ENCODE measurements at regions of chr20 and their contacts with region 1.

Region 1: DNA sequence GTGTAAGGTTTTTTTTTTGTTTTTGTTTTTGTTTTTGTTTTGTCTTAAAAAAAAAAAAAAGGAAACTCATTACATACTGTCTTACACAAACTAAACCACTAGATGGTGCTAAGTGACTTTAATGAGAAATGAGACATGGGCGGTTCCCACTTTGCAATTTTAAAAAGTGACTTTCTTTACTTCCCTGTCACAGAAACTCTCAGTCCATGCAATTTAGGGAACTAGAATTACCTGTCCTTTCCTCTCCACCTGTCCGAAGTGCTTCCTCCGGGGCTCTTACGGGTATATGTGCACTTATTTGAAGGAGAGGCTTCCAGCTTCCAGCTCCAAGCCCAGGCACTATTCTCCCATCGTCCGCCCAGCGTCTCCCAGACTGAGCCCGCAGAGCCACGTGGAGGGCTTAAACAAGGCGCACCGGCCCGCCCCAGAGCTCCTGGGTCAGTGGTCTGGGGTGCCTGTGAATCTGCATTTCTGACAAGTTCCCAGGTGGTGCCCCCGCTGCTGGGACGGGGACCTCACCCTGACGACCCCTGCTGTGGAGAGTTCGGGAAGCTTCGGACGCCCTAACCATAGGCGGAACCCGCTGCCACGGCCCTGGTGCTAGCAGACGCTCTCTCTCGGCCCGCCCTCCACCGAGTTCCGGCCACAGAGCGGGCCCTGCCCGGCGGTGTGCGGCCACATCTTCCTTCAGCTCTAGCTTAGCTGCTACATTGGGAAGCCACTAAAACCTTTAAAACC is 26.1 kb downstream of the BFSP1 start:
- DNase-seq: peak; percentile 67 to 89 (median 83)
- ATAC-seq: peak; percentile 88 to 90
- H3K4me3 ChIP-seq: peak overlapping the region; percentile 49
- H3K27ac ChIP-seq: no peak overlapping the region
- H3K4me1 ChIP-seq: no peaks in the 10 kb centered on the region
- H3K27me3 ChIP-seq: no peaks in the 10 kb centered on the region

Region 2: DNA sequence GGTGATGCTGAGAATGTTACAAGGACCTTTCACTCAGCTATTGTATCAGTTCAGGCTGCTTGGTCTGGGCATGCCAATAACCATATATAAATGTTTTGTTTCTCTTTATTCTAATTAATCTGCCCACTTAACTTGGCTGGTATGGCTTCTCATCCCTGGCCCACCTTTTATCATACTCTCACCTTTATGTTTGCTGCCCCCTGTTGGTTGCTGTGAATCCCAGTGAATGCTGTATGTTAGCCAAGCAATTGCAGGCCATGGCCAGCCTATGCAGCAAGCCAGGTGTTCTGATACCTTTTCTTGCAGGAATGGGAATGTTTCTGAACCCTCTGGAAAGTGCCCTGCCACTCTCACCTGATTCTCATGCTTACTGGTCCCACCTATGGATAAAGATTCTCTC is 223.6 kb before region 1 on chr20:
- intact Hi-C with region 1: no loop called
- DNase-seq: no peak
- ATAC-seq: no peak
- H3K4me3 ChIP-seq: no peak overlapping the region
- H3K27ac ChIP-seq: no peak overlapping the region
- H3K4me1 ChIP-seq: no peaks in the 10 kb centered on the region
- H3K27me3 ChIP-seq: no peaks in the 10 kb centered on the region

Region 3: GRCh38 chr20:17491041-17491440 is 14.0 kb before region 1 on chr20:
- intact Hi-C with region 1: no loop called
- DNase-seq: no peak
- ATAC-seq: no peak
- H3K4me3 ChIP-seq: no peak overlapping the region
- H3K27ac ChIP-seq: no peak overlapping the region
- H3K4me1 ChIP-seq: no peaks in the 10 kb centered on the region
- H3K27me3 ChIP-seq: no peaks in the 10 kb centered on the region

Region 4: DNA sequence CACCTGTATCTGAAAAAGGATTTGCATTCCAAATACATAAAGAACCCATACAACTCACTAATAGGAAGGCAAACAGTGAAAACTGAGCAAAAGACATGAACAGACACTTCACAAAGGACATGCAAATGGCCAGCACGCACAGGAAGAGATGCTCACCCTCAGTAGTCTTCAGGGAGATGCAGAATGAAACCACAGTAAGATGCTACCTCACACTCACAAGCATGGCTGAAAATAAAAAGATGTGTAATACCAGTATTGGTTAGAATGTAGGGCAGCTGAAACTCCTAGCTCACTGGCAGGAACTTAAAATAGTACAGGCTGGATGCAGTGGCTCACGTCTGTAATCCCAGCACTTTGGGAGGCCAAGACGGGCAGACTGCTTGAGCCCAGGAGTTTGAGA is 399.0 kb after region 1 on chr20:
- intact Hi-C with region 1: loop called in 2 of 4 experiments (anchors 5 to 10 kb)
- DNase-seq: no peak
- ATAC-seq: no peak
- H3K4me3 ChIP-seq: no peak overlapping the region
- H3K27ac ChIP-seq: no peak overlapping the region
- H3K4me1 ChIP-seq: no peaks in the 10 kb centered on the region
- H3K27me3 ChIP-seq: no peaks in the 10 kb centered on the region

Region 5: GRCh38 chr20:17938871-17939619 is 434.0 kb after region 1 on chr20:
- intact Hi-C with region 1: loop called in 1 of 4 experiments (anchors 10 kb)
- DNase-seq: peak; percentile 62 to 83 (median 81)
- ATAC-seq: peak; percentile 72 to 74
- H3K4me3 ChIP-seq: no peak overlapping the region
- H3K27ac ChIP-seq: no peak overlapping the region
- H3K4me1 ChIP-seq: no peaks in the 10 kb centered on the region
- H3K27me3 ChIP-seq: no peaks in the 10 kb centered on the region

Region 6: DNA sequence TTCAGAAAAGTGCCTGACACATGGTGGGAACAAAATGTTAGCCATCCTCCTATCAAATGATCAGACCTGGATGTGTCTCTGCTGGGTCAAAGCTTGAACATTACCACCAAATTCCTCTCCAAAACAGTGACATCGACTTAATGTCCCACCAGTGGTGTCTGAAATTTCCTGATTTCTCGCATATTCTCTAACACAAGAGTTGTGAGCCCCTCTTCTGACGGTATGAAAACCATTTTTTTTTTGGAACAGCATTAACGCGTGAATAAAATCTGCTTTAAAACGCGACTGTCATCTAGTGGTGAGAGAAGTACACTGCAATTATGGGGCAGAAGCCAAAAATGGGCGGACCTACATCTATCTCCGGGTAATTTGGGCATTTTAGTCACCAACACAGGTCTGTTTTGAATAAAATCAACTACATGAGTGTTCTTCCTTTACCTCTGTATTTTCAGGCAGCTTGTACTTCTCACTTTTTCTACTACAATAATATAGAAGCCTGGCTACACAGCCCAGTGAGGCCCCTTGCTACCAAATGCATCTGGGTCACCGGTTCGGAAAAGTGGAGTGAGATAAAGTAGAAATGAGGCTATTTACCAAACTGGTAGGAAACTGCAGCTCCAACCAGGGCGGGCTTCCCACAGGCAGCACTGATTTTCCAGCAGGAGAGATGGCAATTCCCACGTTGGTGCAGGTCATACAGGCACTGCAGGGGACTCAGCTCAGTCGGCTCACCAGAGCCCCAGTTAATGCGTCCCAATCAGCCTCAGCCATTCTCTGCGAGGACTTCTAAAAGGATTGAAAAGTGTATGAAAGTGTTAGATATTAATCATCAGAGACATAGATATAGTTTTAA is 491.1 kb after region 1 on chr20:
- intact Hi-C with region 1: loop called in 3 of 4 experiments (anchors 5 to 10 kb)
- DNase-seq: no peak
- ATAC-seq: peak; percentile 77 to 84
- H3K4me3 ChIP-seq: no peak overlapping the region
- H3K27ac ChIP-seq: no peak overlapping the region
- H3K4me1 ChIP-seq: no peaks in the 10 kb centered on the region
- H3K27me3 ChIP-seq: no peaks in the 10 kb centered on the region

Region 7: DNA sequence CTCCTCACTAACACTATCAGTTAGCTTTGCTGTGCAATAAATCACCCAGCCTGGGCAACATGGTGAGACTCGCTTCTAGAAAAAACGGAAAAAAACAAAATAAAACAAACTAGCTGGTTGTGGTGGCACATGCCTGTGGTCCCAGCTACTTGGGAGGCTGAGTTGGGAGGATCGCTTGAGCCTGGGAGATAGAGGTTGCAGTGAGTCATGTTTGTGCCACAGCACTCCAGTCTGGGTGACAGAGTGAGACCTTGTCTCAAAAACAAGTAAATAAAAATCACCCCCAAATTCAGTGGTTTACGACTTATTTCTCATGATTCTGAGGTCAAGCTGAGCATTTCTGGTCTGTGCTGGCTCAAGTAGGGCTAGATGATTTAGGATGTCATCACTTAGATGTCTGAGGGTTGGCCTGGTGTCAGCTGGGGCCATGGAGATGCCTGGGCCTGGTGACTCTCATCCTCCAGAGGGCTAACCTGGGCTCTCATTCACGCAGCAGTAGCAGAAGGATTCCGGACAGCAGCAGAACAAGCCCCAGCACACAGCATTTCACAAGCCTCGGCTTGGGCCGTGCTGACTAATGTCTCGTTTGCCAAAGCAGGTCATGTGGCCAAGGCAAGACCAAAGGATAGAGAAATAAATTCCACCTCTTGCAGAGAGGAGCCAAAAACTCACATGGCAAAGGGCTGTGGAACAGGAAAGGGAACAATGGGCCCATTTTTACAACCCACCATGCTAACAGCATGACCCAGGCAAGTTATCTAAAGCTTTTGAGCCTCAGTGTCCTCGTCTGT is 496.3 kb after region 1 on chr20:
- intact Hi-C with region 1: loop called in 3 of 4 experiments (anchors 5 to 10 kb)
- DNase-seq: peak; percentile 80 to 84 (median 83)
- ATAC-seq: peak; percentile 94 to 95
- H3K4me3 ChIP-seq: no peak overlapping the region
- H3K27ac ChIP-seq: no peak overlapping the region
- H3K4me1 ChIP-seq: no peaks in the 10 kb centered on the region
- H3K27me3 ChIP-seq: no peaks in the 10 kb centered on the region

Region 8: DNA sequence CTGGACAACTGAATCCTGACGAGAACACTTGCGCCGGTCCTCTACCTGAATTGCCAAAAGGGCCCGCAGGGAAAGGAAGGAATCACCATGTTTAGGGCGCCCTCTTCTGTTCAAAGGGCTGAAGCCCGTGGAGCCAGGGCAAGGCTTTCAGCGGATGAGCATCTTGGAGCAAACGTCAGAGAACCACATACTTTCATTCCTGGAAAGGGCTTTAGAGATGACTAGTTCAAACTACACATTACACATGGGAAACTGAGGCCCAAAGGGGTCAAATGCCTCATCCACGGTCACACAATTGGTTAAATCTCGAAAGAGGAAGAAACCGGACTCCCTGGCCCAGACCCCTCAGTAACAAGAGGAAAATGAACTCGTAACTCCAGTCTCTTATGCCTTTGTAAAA is 771.8 kb after region 1 on chr20:
- intact Hi-C with region 1: loop called in 1 of 4 experiments (anchors 10 kb)
- DNase-seq: peak; percentile 43 to 75 (median 57)
- ATAC-seq: peak; percentile 55 to 64
- H3K4me3 ChIP-seq: no peak overlapping the region
- H3K27ac ChIP-seq: no peak overlapping the region
- H3K4me1 ChIP-seq: no peaks in the 10 kb centered on the region
- H3K27me3 ChIP-seq: peaks cover 7% of the 10 kb centered on the region

Measured in right cardiac atrium (tissue), 5 donors.